ENCODE measurements at regions of chr6 and their contacts with region 1.

Region 1: GRCh38 chr6:14366872-14367271 is 249.3 kb downstream of the CD83 start:
- DNase-seq: no peak
- H3K4me3 ChIP-seq: no peak overlapping the region
- H3K27ac ChIP-seq: no peak overlapping the region
- H3K4me1 ChIP-seq: peaks cover 0 to 7% (median 4%) of the 10 kb centered on the region in 4 experiments; a peak in 4 of 7 replicates
- H3K27me3 ChIP-seq: no peaks in the 10 kb centered on the region
- CTCF ChIP-seq: no peak
- EP300 ChIP-seq: no peak
- POLR2A ChIP-seq: no peak
- RAD21 ChIP-seq: no peak

Region 2: GRCh38 chr6:14348389-14348788 is 18.5 kb before region 1 on chr6:
- CTCF ChIA-PET with region 1: no interaction called
- POLR2A ChIA-PET with region 1: no interaction called
- DNase-seq: no peak
- H3K4me3 ChIP-seq: no peak overlapping the region
- H3K27ac ChIP-seq: no peak overlapping the region
- H3K4me1 ChIP-seq: peaks cover 0 to 4% (median 2%) of the 10 kb centered on the region in 4 experiments; a peak in 2 of 7 replicates
- H3K27me3 ChIP-seq: no peaks in the 10 kb centered on the region; a peak in 1 of 7 replicates
- CTCF ChIP-seq: no peak
- EP300 ChIP-seq: no peak
- POLR2A ChIP-seq: no peak
- RAD21 ChIP-seq: no peak

Region 3: GRCh38 chr6:14381829-14382677 is 15.2 kb after region 1 on chr6:
- CTCF ChIA-PET with region 1: no interaction called
- POLR2A ChIA-PET with region 1: interaction called, 14 read pairs
- DNase-seq: no peak
- H3K4me3 ChIP-seq: peak overlapping the region in 1 of 4 experiments; percentile 45; a peak in 2 of 8 replicates
- H3K27ac ChIP-seq: peak overlapping the region; percentile 42; the same call in 1 of the 2 replicates
- H3K4me1 ChIP-seq: peaks cover 13 to 41% (median 34%) of the 10 kb centered on the region in 4 experiments; a peak in 6 of 7 replicates
- H3K27me3 ChIP-seq: no peaks in the 10 kb centered on the region
- CTCF ChIP-seq: no peak
- EP300 ChIP-seq: no peak
- POLR2A ChIP-seq: no peak
- RAD21 ChIP-seq: no peak